CD8-positive, alpha-beta T cell (primary cell): ENCODE measurements at regions of chr12 and their contacts with region 1.

Region 1: GRCh38 chr12:100234598-100235304 is 32.1 kb downstream of the DEPDC4 start:
- DNase-seq: peak in 3 of 9 experiments; percentile 5 to 48 (median 37)
- ATAC-seq: no peak
- H3K4me3 ChIP-seq: no peak overlapping the region
- H3K4me3 Mint-ChIP-seq: no peak overlapping the region
- H3K27ac ChIP-seq: no peak overlapping the region
- H3K27ac Mint-ChIP-seq: no peak overlapping the region
- H3K4me1 ChIP-seq: no peaks in the 10 kb centered on the region
- H3K4me1 Mint-ChIP-seq: no peaks in the 10 kb centered on the region
- H3K27me3 ChIP-seq: no peaks in the 10 kb centered on the region
- H3K27me3 Mint-ChIP-seq: no peaks in the 10 kb centered on the region
- CTCF ChIP-seq: peak; percentile 77

Region 2: DNA sequence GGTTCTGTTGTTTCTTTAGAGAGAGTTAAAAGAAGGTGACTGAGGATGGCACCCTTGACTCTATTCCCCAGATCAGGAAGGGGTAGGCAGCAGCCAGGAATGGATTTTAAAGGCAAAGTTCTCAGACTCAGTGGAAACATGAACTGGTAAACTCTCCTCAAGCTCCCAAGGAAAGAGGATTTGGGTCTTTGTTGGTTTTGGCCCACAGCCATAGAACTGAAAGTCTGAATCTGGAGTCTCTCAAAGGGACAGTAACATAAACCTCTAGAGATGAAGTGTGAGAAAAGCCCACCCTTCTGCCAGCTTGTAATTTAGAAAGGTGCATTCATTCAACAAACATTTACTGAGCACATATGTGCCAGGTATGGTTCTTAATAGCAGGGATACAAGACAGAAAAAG is 63.5 kb before region 1 on chr12:
- CTCF ChIA-PET with region 1: no interaction called
- POLR2A ChIA-PET with region 1: no interaction called
- intact Hi-C with region 1: no loop called
- DNase-seq: no peak
- ATAC-seq: no peak
- H3K4me3 ChIP-seq: no peak overlapping the region
- H3K4me3 Mint-ChIP-seq: no peak overlapping the region
- H3K27ac ChIP-seq: no peak overlapping the region
- H3K27ac Mint-ChIP-seq: no peak overlapping the region
- H3K4me1 ChIP-seq: no peaks in the 10 kb centered on the region
- H3K4me1 Mint-ChIP-seq: no peaks in the 10 kb centered on the region
- H3K27me3 ChIP-seq: no peaks in the 10 kb centered on the region
- H3K27me3 Mint-ChIP-seq: no peaks in the 10 kb centered on the region
- CTCF ChIP-seq: no peak

Region 3: GRCh38 chr12:100258127-100258526 is 23.4 kb after region 1 on chr12:
- CTCF ChIA-PET with region 1: no interaction called
- POLR2A ChIA-PET with region 1: no interaction called
- intact Hi-C with region 1: no loop called
- DNase-seq: no peak
- ATAC-seq: no peak
- H3K4me3 ChIP-seq: no peak overlapping the region
- H3K4me3 Mint-ChIP-seq: no peak overlapping the region
- H3K27ac ChIP-seq: no peak overlapping the region
- H3K27ac Mint-ChIP-seq: no peak overlapping the region
- H3K4me1 ChIP-seq: no peaks in the 10 kb centered on the region
- H3K4me1 Mint-ChIP-seq: no peaks in the 10 kb centered on the region
- H3K27me3 ChIP-seq: no peaks in the 10 kb centered on the region
- H3K27me3 Mint-ChIP-seq: no peaks in the 10 kb centered on the region
- CTCF ChIP-seq: no peak

Region 4: GRCh38 chr12:100329800-100330199 is 95.0 kb after region 1 on chr12:
- CTCF ChIA-PET with region 1: no interaction called
- POLR2A ChIA-PET with region 1: no interaction called
- intact Hi-C with region 1: loop called in 1 of 2 experiments (anchors 10 kb)
- DNase-seq: peak in 1 of 9 experiments; percentile 6
- ATAC-seq: no peak
- H3K4me3 ChIP-seq: no peak overlapping the region
- H3K4me3 Mint-ChIP-seq: no peak overlapping the region
- H3K27ac ChIP-seq: no peak overlapping the region
- H3K27ac Mint-ChIP-seq: no peak overlapping the region
- H3K4me1 ChIP-seq: no peaks in the 10 kb centered on the region
- H3K4me1 Mint-ChIP-seq: no peaks in the 10 kb centered on the region
- H3K27me3 ChIP-seq: no peaks in the 10 kb centered on the region
- H3K27me3 Mint-ChIP-seq: no peaks in the 10 kb centered on the region
- CTCF ChIP-seq: no peak

Region 5: GRCh38 chr12:100554608-100555077 is 319.9 kb after region 1 on chr12:
- CTCF ChIA-PET with region 1: interaction called, 10 read pairs
- POLR2A ChIA-PET with region 1: no interaction called
- intact Hi-C with region 1: loop called (anchors 1 to 2 kb)
- DNase-seq: peak in 2 of 9 experiments; percentile 22 to 41
- ATAC-seq: no peak
- H3K4me3 ChIP-seq: no peak overlapping the region
- H3K4me3 Mint-ChIP-seq: no peak overlapping the region
- H3K27ac ChIP-seq: no peak overlapping the region
- H3K27ac Mint-ChIP-seq: no peak overlapping the region
- H3K4me1 ChIP-seq: no peaks in the 10 kb centered on the region
- H3K4me1 Mint-ChIP-seq: no peaks in the 10 kb centered on the region
- H3K27me3 ChIP-seq: no peaks in the 10 kb centered on the region
- H3K27me3 Mint-ChIP-seq: peaks cover 6% of the 10 kb centered on the region
- CTCF ChIP-seq: peak; percentile 42

Region 6: GRCh38 chr12:100672075-100672592 is 437.4 kb after region 1 on chr12:
- CTCF ChIA-PET with region 1: no interaction called
- POLR2A ChIA-PET with region 1: no interaction called
- intact Hi-C with region 1: loop called (anchors 5 kb)
- DNase-seq: peak in 3 of 9 experiments; percentile 8 to 16 (median 15)
- ATAC-seq: no peak
- H3K4me3 ChIP-seq: no peak overlapping the region
- H3K4me3 Mint-ChIP-seq: no peak overlapping the region
- H3K27ac ChIP-seq: no peak overlapping the region
- H3K27ac Mint-ChIP-seq: no peak overlapping the region
- H3K4me1 ChIP-seq: no peaks in the 10 kb centered on the region
- H3K4me1 Mint-ChIP-seq: no peaks in the 10 kb centered on the region
- H3K27me3 ChIP-seq: no peaks in the 10 kb centered on the region
- H3K27me3 Mint-ChIP-seq: peaks cover 5% of the 10 kb centered on the region
- CTCF ChIP-seq: no peak

Region 7: DNA sequence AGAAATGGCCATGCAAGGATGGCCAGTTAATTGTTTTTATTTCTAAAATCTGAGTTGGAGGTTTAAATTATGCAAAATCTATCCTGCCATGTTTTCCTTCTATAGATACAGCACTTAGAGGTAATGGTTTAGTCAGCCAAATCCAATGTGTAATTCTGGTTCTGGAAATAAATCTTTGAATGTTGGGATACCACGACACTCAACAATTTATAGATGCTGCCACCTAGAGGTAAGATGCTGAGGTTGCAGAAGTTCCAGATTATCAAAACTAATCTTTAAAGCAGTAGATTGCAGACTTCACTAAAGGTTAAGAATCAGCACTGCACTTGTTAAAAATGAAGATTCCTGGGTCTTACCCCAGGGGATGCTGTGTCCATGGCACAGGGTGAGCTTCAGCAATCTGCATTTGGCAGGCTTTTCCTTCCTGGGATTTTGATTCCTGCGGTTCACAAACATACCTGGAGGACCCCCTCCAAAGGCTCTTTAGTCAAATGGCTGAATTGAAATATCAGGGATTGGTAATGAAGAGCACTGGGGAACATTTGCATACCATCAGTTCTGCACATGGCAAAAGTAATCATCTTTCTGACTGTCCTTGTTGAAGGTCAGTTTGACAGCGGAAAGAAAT is 506.4 kb after region 1 on chr12:
- CTCF ChIA-PET with region 1: no interaction called
- POLR2A ChIA-PET with region 1: no interaction called
- intact Hi-C with region 1: loop called in 1 of 2 experiments (anchors 2 kb)
- DNase-seq: no peak
- ATAC-seq: no peak
- H3K4me3 ChIP-seq: no peak overlapping the region
- H3K4me3 Mint-ChIP-seq: no peak overlapping the region
- H3K27ac ChIP-seq: no peak overlapping the region
- H3K27ac Mint-ChIP-seq: no peak overlapping the region
- H3K4me1 ChIP-seq: no peaks in the 10 kb centered on the region
- H3K4me1 Mint-ChIP-seq: no peaks in the 10 kb centered on the region
- H3K27me3 ChIP-seq: no peaks in the 10 kb centered on the region
- H3K27me3 Mint-ChIP-seq: no peaks in the 10 kb centered on the region
- CTCF ChIP-seq: peak; percentile 26

Region 8: GRCh38 chr12:101323255-101323654 is 1088.5 kb after region 1 on chr12:
- CTCF ChIA-PET with region 1: interaction called, 4 read pairs
- POLR2A ChIA-PET with region 1: no interaction called
- intact Hi-C with region 1: loop called in 1 of 2 experiments (anchors 2 kb)
- DNase-seq: no peak
- ATAC-seq: no peak
- H3K4me3 ChIP-seq: no peak overlapping the region
- H3K4me3 Mint-ChIP-seq: no peak overlapping the region
- H3K27ac ChIP-seq: no peak overlapping the region
- H3K27ac Mint-ChIP-seq: no peak overlapping the region
- H3K4me1 ChIP-seq: no peaks in the 10 kb centered on the region
- H3K4me1 Mint-ChIP-seq: no peaks in the 10 kb centered on the region
- H3K27me3 ChIP-seq: no peaks in the 10 kb centered on the region
- H3K27me3 Mint-ChIP-seq: no peaks in the 10 kb centered on the region
- CTCF ChIP-seq: no peak